HCT116 (cell line): ENCODE measurements at regions of chr4 and their contacts with region 1.

Region 1: GRCh38 chr4:77203380-77204197 is 46.6 kb downstream of the CCNG2 start:
- DNase-seq: peak; percentile 75
- ATAC-seq: peak; percentile 93
- H3K4me3 ChIP-seq: no peak overlapping the region
- H3K27ac ChIP-seq: no peak overlapping the region
- H3K4me1 ChIP-seq: peaks cover 0 to 12% of the 10 kb centered on the region in 2 experiments; a peak in 1 of 4 replicates
- H3K27me3 ChIP-seq: no peaks in the 10 kb centered on the region
- CTCF ChIP-seq: peak; percentile 76 to 84 (median 84)
- POLR2A ChIP-seq: no peak
- RAD21 ChIP-seq: peak; percentile 95

Region 2: DNA sequence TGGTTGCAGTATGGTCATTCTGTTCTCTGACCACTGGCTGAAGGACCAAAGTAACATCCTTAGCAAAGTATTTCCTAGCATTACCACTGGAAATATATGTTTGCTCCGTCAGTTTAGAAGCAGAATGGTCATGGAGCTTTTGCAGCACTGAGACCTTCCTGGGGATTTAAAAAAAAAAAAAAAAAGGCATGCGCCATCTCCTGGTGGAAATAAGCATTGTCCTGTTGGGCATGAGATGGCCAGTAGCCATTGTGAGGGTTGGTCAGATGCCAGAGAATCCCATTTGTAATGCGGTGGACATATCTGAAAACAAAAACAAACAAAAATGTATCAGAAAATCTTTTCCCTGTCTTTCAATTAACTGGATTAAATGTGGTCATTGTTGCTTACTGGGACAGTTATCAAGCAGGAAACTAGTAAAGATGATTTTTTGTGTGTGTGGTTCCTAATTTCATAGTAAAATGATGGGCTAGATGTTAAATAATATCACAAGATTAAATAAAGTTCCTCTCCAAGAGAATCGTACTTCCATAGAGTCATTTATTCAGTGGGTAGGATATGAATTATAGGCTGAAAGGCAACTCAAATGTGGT is 445.2 kb before region 1 on chr4:
- CTCF ChIA-PET with region 1: interaction called, 8 read pairs
- POLR2A ChIA-PET with region 1: no interaction called
- RAD21 ChIA-PET with region 1: no interaction called
- intact Hi-C with region 1: loop called (anchors 10 kb)
- DNase-seq: peak; percentile 42
- ATAC-seq: peak; percentile 62; the same call in 1 of the 2 replicates
- H3K4me3 ChIP-seq: no peak overlapping the region
- H3K27ac ChIP-seq: no peak overlapping the region
- H3K4me1 ChIP-seq: peaks cover 11 to 13% of the 10 kb centered on the region in 2 experiments
- H3K27me3 ChIP-seq: no peaks in the 10 kb centered on the region
- CTCF ChIP-seq: peak; percentile 58 to 85 (median 69); a peak in 5 of 6 replicates
- POLR2A ChIP-seq: no peak
- RAD21 ChIP-seq: peak; percentile 59

Region 3: DNA sequence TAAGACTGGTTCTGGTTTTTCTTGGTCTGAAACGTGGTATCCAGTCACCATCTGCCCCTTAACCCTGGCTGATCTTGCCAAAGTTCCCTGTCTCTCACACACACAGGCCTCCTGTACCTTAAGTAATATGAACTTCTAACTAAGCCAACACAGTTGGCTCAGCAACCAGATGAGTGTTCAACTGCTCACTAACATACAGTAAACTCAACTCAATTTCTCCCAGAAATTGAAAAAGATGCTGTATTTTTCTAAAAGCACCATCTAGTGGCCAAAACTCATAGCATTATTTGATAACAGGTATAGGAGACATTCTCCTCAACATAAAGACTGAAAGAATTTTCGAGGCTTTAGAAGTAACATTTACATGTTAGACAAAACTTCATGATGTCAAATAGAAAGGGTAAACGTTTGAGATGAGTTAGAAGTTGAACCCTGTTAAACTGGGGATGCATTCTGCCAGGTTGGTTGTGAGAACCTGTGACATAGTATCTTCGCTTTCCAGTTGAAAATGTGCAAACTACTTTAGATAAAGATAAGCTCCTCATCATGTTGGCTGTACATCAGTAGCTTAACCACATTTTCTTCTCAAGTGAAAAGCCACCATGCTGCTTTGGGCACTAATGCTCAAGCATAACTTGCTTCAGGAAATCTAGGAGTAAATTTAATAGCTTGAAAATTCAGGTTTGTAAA is 159.0 kb before region 1 on chr4:
- CTCF ChIA-PET with region 1: interaction called, 40 read pairs
- POLR2A ChIA-PET with region 1: interaction called, 3 read pairs
- RAD21 ChIA-PET with region 1: interaction called in 1 of 2 experiments, 5 read pairs
- intact Hi-C with region 1: loop called (anchors 1 kb)
- DNase-seq: no peak
- ATAC-seq: peak; percentile 63
- H3K4me3 ChIP-seq: no peak overlapping the region
- H3K27ac ChIP-seq: no peak overlapping the region
- H3K4me1 ChIP-seq: no peaks in the 10 kb centered on the region
- H3K27me3 ChIP-seq: no peaks in the 10 kb centered on the region
- CTCF ChIP-seq: peak; percentile 48 to 80 (median 63); a peak in 5 of 6 replicates
- POLR2A ChIP-seq: no peak
- RAD21 ChIP-seq: peak; percentile 62

Region 4: DNA sequence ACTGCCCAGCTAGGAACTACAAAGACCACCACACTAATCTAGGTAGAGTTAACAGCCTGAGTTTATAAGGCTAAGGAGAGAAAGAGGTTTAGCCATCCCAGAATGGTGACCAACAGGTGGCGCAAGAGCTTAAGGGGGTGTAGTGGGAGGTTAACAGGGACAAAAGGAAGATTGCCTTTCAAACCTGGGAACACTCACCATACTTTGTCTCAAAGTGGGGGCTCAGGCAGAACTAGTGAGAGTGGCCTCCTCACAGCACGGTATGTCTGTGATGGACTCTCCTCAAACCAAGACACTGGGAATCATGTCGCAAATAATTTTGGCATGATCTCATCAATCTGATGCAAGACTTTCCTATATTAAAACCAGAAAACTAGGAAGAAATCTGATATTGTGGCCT is 151.2 kb before region 1 on chr4:
- CTCF ChIA-PET with region 1: interaction called, 74 read pairs
- POLR2A ChIA-PET with region 1: no interaction called
- RAD21 ChIA-PET with region 1: interaction called, 3 to 5 read pairs
- intact Hi-C with region 1: loop called (anchors 1 kb)
- DNase-seq: peak; percentile 48
- ATAC-seq: peak; percentile 81
- H3K4me3 ChIP-seq: no peak overlapping the region
- H3K27ac ChIP-seq: no peak overlapping the region
- H3K4me1 ChIP-seq: peaks cover 6 to 12% of the 10 kb centered on the region in 2 experiments; a peak in 3 of 4 replicates
- H3K27me3 ChIP-seq: no peaks in the 10 kb centered on the region
- CTCF ChIP-seq: peak; percentile 55 to 77 (median 76); a peak in 5 of 6 replicates
- POLR2A ChIP-seq: no peak
- RAD21 ChIP-seq: peak; percentile 61

Region 5: DNA sequence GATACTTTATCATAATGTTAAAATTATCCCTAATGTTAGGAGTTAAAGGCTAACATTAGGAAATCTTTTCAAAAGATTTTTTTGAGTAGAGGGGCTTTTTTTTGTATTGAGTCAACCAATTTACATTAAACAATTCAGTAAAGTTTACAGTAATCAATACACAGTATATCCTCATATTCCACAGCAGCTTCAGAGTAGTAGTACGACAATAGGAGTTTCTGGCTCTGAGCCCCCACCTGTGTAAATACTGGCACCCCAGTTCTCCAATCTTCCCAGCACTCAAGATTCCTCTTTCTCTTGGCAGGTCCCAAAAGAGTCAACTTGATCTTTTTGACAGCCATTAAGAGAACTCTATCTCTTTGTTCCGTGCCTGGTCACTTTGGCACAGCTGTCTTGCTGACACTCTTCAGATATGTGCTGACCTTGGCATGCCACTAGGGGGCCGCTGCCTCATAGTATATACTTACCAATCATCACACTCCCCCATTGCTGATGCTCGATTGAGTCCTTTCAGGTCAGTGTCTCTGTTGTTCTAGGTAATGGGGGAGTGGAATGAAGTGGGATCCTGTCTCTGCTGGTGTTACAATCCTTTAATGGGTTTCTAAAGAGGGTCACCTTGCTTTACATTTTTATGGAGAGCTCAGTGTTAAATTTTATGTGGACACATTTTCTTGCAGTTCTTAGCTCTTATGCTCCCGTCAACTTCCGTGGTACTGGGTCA is 108.3 kb before region 1 on chr4:
- CTCF ChIA-PET with region 1: interaction called, 38 read pairs
- POLR2A ChIA-PET with region 1: no interaction called
- RAD21 ChIA-PET with region 1: interaction called, 8 to 10 read pairs
- intact Hi-C with region 1: loop called (anchors 2 kb)
- DNase-seq: peak; percentile 49
- ATAC-seq: peak; percentile 100
- H3K4me3 ChIP-seq: no peak overlapping the region
- H3K27ac ChIP-seq: no peak overlapping the region
- H3K4me1 ChIP-seq: peaks cover 0 to 11% of the 10 kb centered on the region in 2 experiments; a peak in 1 of 4 replicates
- H3K27me3 ChIP-seq: no peaks in the 10 kb centered on the region
- CTCF ChIP-seq: peak; percentile 61 to 92 (median 90)
- POLR2A ChIP-seq: no peak
- RAD21 ChIP-seq: peak; percentile 75

Region 6: DNA sequence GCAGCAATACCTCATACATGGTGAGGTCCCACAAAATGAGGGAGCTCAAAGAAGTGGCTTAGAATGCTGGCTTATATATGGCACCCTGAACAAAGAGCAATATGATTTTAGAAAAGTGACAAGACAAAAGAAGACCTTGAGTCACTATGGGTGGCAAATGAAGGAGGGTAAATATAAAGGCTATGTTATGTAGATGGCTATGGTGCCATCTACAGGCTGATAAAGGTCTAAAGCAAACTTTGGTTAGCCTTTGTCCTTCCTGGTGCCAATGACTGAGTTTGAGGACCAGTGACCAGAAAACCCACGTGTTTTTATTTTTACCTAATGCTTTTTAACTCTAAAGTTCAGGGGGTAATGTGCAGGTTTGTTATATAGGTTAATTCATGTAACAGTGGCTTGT is 105.3 kb after region 1 on chr4:
- CTCF ChIA-PET with region 1: no interaction called
- POLR2A ChIA-PET with region 1: no interaction called
- RAD21 ChIA-PET with region 1: no interaction called
- intact Hi-C with region 1: no loop called
- DNase-seq: peak; percentile 10
- ATAC-seq: peak; percentile 97
- H3K4me3 ChIP-seq: no peak overlapping the region
- H3K27ac ChIP-seq: no peak overlapping the region
- H3K4me1 ChIP-seq: no peaks in the 10 kb centered on the region
- H3K27me3 ChIP-seq: peaks cover 23% of the 10 kb centered on the region
- CTCF ChIP-seq: peak; percentile 53 to 62 (median 56); a peak in 4 of 6 replicates
- POLR2A ChIP-seq: no peak
- RAD21 ChIP-seq: peak; percentile 74

Region 7: GRCh38 chr4:77734928-77735327 is 531.3 kb after region 1 on chr4:
- CTCF ChIA-PET with region 1: no interaction called
- POLR2A ChIA-PET with region 1: no interaction called
- RAD21 ChIA-PET with region 1: no interaction called
- intact Hi-C with region 1: no loop called
- DNase-seq: no peak
- ATAC-seq: peak; percentile 52; the same call in 1 of the 2 replicates
- H3K4me3 ChIP-seq: no peak overlapping the region
- H3K27ac ChIP-seq: no peak overlapping the region
- H3K4me1 ChIP-seq: no peaks in the 10 kb centered on the region
- H3K27me3 ChIP-seq: no peaks in the 10 kb centered on the region
- CTCF ChIP-seq: no peak
- POLR2A ChIP-seq: no peak
- RAD21 ChIP-seq: no peak